HCT116 (cell line): ENCODE measurements at regions of chr1 and their contacts with region 1.

Region 1: DNA sequence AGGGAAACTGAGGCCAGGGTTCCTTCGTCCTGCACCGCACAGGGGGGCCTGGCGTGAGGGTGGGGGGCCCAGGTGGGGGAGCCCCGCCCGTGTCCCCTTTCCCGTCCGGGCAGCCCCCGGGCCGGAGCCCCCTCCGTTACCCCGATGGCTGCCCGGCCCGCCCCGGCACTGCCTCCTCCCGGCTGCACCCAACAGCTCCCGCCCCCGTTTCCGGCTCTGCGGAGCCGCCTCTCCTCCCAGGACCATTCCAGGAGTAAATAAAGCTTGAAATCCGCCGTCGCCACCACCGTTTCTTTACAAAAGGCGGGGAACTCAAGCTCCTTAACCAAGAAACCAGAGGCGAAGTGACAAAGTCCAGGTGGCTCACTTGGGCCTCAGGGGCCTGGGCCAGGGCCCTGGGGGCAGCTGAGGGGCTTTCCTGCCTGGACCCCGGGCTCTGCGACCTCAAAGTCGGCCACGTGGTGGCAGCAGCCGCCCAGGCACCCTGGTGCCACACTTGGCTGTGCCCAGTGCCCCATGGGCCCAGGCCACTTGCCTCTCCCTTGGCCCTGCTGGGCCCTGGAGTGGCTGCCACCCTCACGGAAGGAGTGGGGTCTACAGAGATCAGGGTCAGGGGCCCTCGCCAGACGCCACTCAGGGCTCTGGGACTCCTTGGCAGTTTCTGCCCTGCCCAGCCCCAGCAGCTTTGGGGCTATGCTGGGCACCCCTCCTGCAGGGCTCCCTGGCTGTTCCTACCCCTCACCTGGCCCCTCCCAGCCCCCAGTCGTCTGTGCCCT is 514 bp upstream of the FAAP20 start:
- DNase-seq: peak; percentile 67
- ATAC-seq: peak; percentile 80
- H3K4me3 ChIP-seq: peak overlapping the region; percentile 49 to 62
- H3K27ac ChIP-seq: peak overlapping the region; percentile 49
- H3K4me1 ChIP-seq: peaks cover 14 to 39% of the 10 kb centered on the region in 2 experiments; a peak in 3 of 4 replicates
- H3K27me3 ChIP-seq: no peaks in the 10 kb centered on the region
- CTCF ChIP-seq: peak in 2 of 3 experiments; percentile 85 to 90; a peak in 4 of 6 replicates
- POLR2A ChIP-seq: no peak
- RAD21 ChIP-seq: no peak

Region 2: DNA sequence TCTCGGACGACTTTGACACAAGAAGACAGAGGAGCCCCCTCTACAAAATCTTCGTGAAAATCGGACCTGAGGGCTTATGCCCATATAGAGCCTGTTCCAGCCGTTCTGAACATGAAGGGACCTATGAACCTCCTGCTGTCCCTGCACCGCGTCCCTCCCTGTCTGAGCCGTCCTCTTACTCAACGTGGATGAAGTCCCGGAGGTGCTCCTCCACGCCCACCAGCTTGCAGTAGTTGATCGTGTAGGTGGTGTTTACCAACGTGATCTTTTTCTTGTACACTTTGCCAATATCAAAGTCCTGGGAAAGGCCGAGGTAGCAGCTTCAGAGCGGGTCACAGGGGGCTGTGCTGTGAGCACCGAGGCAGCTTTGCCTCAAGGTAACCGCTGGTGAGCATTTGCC is 231.5 kb before region 1 on chr1:
- CTCF ChIA-PET with region 1: no interaction called
- POLR2A ChIA-PET with region 1: no interaction called
- RAD21 ChIA-PET with region 1: no interaction called
- intact Hi-C with region 1: no loop called
- DNase-seq: no peak
- ATAC-seq: no peak
- H3K4me3 ChIP-seq: no peak overlapping the region
- H3K27ac ChIP-seq: no peak overlapping the region
- H3K4me1 ChIP-seq: peaks cover 12 to 39% of the 10 kb centered on the region in 2 experiments
- H3K27me3 ChIP-seq: no peaks in the 10 kb centered on the region
- CTCF ChIP-seq: no peak
- POLR2A ChIP-seq: no peak
- RAD21 ChIP-seq: no peak

Region 3: GRCh38 chr1:2205191-2205952 is 10.3 kb after region 1 on chr1:
- CTCF ChIA-PET with region 1: interaction called, 16 read pairs
- POLR2A ChIA-PET with region 1: no interaction called
- RAD21 ChIA-PET with region 1: interaction called in 1 of 2 experiments, 9 read pairs
- intact Hi-C with region 1: no loop called
- DNase-seq: peak; percentile 86
- ATAC-seq: peak; percentile 86
- H3K4me3 ChIP-seq: peak overlapping the region; percentile 33 to 57
- H3K27ac ChIP-seq: peak overlapping the region; percentile 71; the same call in 1 of the 2 replicates
- H3K4me1 ChIP-seq: peaks cover 21 to 37% of the 10 kb centered on the region in 2 experiments
- H3K27me3 ChIP-seq: no peaks in the 10 kb centered on the region
- CTCF ChIP-seq: no peak
- POLR2A ChIP-seq: no peak
- RAD21 ChIP-seq: no peak

Region 4: DNA sequence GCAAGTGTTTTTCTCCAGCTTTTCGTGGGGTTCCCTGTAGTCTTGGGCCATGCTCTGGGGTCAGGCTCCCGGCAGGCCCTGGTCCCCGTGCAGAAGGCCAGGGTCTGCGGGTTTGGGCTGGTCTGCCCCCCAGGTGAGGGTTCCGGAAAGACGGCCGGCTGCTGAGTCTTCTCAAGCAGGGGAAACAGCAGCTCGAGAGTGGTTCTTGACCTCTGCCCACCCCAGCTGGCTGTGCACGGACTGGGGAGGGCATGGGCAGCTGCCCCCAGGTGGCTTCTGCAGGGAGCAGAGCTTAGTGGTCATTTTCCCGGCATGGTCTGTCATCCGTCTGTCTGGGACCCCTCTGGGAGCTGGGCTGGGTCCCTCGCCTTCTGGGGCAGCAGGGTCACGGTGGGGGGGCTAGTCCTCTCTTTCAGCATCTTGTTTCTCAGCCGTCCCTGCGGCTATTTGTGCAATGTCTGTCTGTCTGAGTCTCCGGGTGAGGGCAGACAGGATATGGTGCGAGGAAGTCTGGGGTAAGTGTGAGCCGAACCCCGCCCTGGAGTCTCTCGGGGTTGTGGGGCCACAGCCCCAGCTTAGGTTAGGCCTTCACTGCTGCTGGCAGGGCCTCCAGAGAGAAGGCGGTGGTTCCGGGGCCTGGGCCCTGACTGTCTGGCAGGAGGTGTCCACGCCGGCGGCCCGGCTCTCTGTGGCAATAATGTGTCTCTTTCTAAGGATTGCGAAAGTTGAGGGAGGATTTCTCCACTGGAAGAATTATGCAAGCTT is 39.1 kb after region 1 on chr1:
- CTCF ChIA-PET with region 1: interaction called, 3 read pairs
- POLR2A ChIA-PET with region 1: no interaction called
- RAD21 ChIA-PET with region 1: no interaction called
- intact Hi-C with region 1: loop called (anchors 5 kb)
- DNase-seq: no peak
- ATAC-seq: no peak
- H3K4me3 ChIP-seq: no peak overlapping the region
- H3K27ac ChIP-seq: no peak overlapping the region
- H3K4me1 ChIP-seq: peaks cover 17 to 29% of the 10 kb centered on the region in 2 experiments
- H3K27me3 ChIP-seq: no peaks in the 10 kb centered on the region
- CTCF ChIP-seq: no peak
- POLR2A ChIP-seq: no peak
- RAD21 ChIP-seq: no peak

Region 5: DNA sequence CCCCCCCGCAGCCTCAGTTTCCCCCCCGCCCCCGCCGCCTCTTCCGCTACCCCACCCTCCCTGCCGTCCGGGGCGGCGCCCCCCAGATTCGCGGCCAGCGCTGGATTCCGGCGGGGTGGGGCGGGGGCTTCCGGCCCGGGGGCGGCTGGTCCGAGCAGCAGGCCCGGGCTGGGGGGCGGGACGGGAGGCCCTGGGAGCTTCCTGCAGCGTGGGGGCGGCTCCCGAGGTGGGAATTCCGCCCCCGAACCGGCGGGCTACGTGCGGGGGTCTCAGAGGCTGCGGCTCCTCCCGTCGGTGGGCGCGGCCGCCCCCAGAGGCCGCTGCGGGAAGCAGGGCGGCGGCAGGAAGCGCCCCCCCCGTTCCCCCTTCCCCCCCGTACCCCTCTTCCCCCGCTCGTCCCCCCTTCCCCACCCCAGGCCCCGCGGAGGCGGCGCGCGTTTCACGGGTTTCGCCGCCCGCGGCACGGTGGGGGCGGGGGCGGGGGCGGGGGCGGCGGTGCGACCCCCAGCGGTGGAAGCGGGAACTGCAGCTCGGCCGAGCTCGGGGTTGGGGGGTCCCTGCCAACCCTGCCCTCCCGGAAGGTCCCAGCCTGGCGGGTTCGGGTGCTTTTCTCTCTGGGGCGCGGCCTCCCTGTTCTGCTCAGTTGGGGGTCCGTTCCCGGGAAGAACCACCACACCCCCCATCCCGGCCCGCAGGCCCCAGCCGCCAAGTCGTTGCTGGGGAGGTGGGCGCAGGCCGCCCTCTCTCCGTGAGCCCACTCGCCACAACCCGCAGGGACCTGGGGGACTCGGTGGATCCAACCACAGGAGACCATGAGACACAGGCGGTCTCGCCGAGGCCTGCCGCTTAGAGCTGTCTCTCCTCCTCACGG is 120.0 kb after region 1 on chr1:
- CTCF ChIA-PET with region 1: interaction called, 18 read pairs
- POLR2A ChIA-PET with region 1: interaction called, 3 read pairs
- RAD21 ChIA-PET with region 1: interaction called in 1 of 2 experiments, 3 read pairs
- intact Hi-C with region 1: no loop called
- DNase-seq: no peak
- ATAC-seq: peak; percentile 45
- H3K4me3 ChIP-seq: peak overlapping the region; percentile 45 to 53
- H3K27ac ChIP-seq: peak overlapping the region; percentile 69; the same call in 1 of the 2 replicates
- H3K4me1 ChIP-seq: peaks cover 16 to 53% of the 10 kb centered on the region in 2 experiments
- H3K27me3 ChIP-seq: no peaks in the 10 kb centered on the region
- CTCF ChIP-seq: peak in 2 of 3 experiments; percentile 59 to 62; a peak in 4 of 6 replicates
- POLR2A ChIP-seq: no peak
- RAD21 ChIP-seq: no peak

Region 6: GRCh38 chr1:2381741-2382620 is 186.9 kb after region 1 on chr1:
- CTCF ChIA-PET with region 1: interaction called, 271 read pairs
- POLR2A ChIA-PET with region 1: interaction called, 16 read pairs
- RAD21 ChIA-PET with region 1: interaction called, 32 to 33 read pairs
- intact Hi-C with region 1: loop called (anchors 1 kb)
- DNase-seq: peak; percentile 28
- ATAC-seq: peak; percentile 93
- H3K4me3 ChIP-seq: no peak overlapping the region
- H3K27ac ChIP-seq: peak overlapping the region; percentile 8; the same call in 1 of the 2 replicates
- H3K4me1 ChIP-seq: 0 out of 4 replicates have a peak, but pooled peaks cover 0 to 6% of the 10 kb centered on the region in 2 experiments
- H3K27me3 ChIP-seq: no peaks in the 10 kb centered on the region
- CTCF ChIP-seq: peak; percentile 88 to 97 (median 91)
- POLR2A ChIP-seq: no peak
- RAD21 ChIP-seq: peak; percentile 98

Region 7: GRCh38 chr1:2391041-2391930 is 196.2 kb after region 1 on chr1 and contains the starts of genes MORN1 and RER1:
- CTCF ChIA-PET with region 1: interaction called, 11 read pairs
- POLR2A ChIA-PET with region 1: interaction called, 6 read pairs
- RAD21 ChIA-PET with region 1: interaction called in 1 of 2 experiments, 5 read pairs
- intact Hi-C with region 1: no loop called
- DNase-seq: peak; percentile 96
- ATAC-seq: peak; percentile 92
- H3K4me3 ChIP-seq: peak within 1 kb of the TSS; percentile 92 to 99
- H3K27ac ChIP-seq: peak within 1 kb of the TSS; percentile 85
- H3K4me1 ChIP-seq: peaks cover 17 to 25% of the 10 kb centered on the region in 2 experiments
- H3K27me3 ChIP-seq: no peaks in the 10 kb centered on the region
- CTCF ChIP-seq: no peak
- POLR2A ChIP-seq: peak; percentile 51
- RAD21 ChIP-seq: no peak
- total RNA-seq, gene MORN1: 21.4 TPM
- total RNA-seq, gene RER1: 155 TPM

Region 8: DNA sequence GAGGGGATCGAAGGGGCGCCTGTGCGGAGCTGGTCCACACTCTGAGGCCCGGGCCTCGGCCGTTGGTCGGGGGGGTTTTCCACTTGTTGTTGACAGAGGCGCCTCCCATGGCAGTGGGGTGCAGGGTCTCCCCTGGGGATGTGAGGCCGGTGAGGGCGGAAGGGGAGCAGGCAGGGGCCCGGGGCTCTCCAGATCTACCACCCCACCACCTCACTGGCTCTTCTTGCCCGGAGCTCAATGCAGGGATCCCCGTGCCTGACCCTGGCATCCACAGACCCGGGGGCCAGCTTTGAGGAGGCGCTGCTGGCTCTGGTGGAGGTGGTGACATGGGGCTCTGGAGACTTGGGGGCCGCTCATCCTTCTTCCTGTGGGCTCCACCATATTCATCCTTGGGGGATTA is 224.3 kb after region 1 on chr1:
- CTCF ChIA-PET with region 1: no interaction called
- POLR2A ChIA-PET with region 1: no interaction called
- RAD21 ChIA-PET with region 1: no interaction called
- intact Hi-C with region 1: no loop called
- DNase-seq: no peak
- ATAC-seq: no peak
- H3K4me3 ChIP-seq: no peak overlapping the region
- H3K27ac ChIP-seq: no peak overlapping the region
- H3K4me1 ChIP-seq: peaks cover 6 to 16% of the 10 kb centered on the region in 2 experiments; a peak in 3 of 4 replicates
- H3K27me3 ChIP-seq: no peaks in the 10 kb centered on the region
- CTCF ChIP-seq: no peak
- POLR2A ChIP-seq: no peak
- RAD21 ChIP-seq: no peak

Region 9: GRCh38 chr1:2545759-2546514 is 350.9 kb after region 1 on chr1:
- CTCF ChIA-PET with region 1: interaction called, 12 read pairs
- POLR2A ChIA-PET with region 1: interaction called, 3 read pairs
- RAD21 ChIA-PET with region 1: interaction called in 1 of 2 experiments, 5 read pairs
- intact Hi-C with region 1: loop called (anchors 1 kb)
- DNase-seq: peak; percentile 82
- ATAC-seq: peak; percentile 75
- H3K4me3 ChIP-seq: peak overlapping the region; percentile 66 to 70
- H3K27ac ChIP-seq: peak overlapping the region; percentile 93
- H3K4me1 ChIP-seq: peaks cover 24 to 51% of the 10 kb centered on the region in 2 experiments
- H3K27me3 ChIP-seq: no peaks in the 10 kb centered on the region
- CTCF ChIP-seq: no peak
- POLR2A ChIP-seq: peak; percentile 69
- RAD21 ChIP-seq: no peak

Region 10: DNA sequence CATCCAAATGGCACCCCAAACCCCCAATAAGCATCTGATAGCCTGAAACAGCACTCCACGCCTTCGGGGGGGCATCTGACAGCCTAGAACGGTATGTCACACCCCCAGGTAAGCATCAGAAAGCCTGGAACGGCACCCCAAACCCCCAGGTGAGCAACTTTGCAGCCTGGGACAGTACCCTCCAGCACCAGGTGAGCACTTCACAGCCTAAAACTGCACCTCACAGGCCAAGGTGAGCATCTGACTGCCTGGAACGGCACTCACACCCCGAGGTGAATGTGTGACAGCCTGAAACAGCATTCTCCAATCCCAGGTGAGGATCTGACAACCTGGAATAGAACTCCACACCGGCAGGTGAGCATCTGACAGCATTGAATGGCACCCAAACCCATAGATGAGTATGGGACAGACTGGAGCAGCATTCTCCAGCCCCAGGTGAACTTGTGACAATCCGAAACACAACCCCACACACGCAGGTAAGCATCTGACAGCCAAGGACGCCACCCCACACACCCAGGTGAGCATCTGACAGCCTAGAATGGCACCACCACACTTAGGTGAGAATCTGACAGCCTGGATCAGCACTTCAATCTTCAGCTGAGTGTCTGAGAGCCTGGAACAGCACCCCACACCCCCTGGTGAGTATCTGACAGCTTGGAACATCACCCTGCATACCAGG is 456.0 kb after region 1 on chr1:
- CTCF ChIA-PET with region 1: no interaction called
- POLR2A ChIA-PET with region 1: no interaction called
- RAD21 ChIA-PET with region 1: no interaction called
- intact Hi-C with region 1: no loop called
- DNase-seq: no peak
- ATAC-seq: no peak
- H3K4me3 ChIP-seq: no peak overlapping the region
- H3K27ac ChIP-seq: no peak overlapping the region
- H3K4me1 ChIP-seq: no peaks in the 10 kb centered on the region
- H3K27me3 ChIP-seq: peaks cover 66% of the 10 kb centered on the region
- CTCF ChIP-seq: no peak
- POLR2A ChIP-seq: no peak
- RAD21 ChIP-seq: no peak